HepG2 (cell line): ENCODE measurements at regions of chr7 and their contacts with region 1.

Region 1: DNA sequence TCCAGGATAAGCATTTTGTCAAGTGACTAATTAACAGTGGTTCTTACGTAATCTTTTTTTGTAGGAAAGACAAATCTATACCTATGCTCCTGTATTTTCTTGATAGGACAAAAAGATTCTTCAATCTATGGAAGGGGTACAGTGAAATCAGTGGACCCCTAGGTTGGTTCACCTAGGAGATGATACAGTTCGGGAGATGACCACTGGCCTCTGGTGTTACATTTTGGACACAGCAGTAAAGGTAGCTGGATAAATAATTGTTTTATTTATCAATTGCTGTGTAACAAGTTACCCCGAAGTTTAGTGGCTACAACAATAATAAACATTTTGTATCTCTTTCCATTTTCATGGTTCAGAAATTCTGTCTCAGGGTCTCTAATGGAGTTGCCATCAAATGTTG is 288.2 kb upstream of the MAGI2 start:
- DNase-seq: no peak
- ATAC-seq: peak; percentile 58
- H3K4me3 ChIP-seq: no peak overlapping the region
- H3K27ac ChIP-seq: no peak overlapping the region
- H3K4me1 ChIP-seq: no peaks in the 10 kb centered on the region
- H3K27me3 ChIP-seq: no peaks in the 10 kb centered on the region
- CTCF ChIP-seq: no peak
- EP300 ChIP-seq: no peak
- POLR2A ChIP-seq: no peak
- RAD21 ChIP-seq: no peak

Region 2: DNA sequence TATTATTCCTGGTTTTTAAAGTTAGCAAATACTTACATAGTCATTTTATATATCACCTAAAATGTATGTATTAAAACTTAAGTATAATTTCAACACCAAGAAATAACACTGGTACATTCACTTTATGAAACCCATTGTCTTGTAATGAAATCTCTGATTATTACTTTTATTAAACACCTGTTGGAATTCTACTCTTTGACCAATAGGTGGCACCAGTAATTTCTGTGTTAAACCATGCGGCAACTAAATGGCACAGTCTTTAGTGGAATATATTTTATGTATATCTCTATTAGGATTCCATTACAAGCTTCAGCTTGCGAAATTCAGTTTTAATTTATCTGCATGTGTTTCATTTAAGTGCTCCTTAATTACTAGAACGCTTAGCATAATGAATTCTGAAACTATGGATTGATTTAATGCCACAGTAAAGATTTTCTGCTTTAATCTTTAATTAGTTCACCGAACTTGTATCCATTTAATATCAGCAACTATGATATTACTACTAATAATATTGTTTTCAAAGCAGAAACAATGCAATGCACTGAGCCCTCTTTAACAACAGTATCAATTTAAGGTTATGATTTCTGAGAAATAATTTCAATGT is 469.5 kb before region 1 on chr7:
- CTCF ChIA-PET with region 1: interaction called, 5 read pairs
- POLR2A ChIA-PET with region 1: no interaction called
- in situ Hi-C with region 1: loop called (anchors 25 kb)
- intact Hi-C with region 1: loop called (anchors 5 kb)
- DNase-seq: peak; percentile 30
- ATAC-seq: no peak
- H3K4me3 ChIP-seq: no peak overlapping the region
- H3K27ac ChIP-seq: no peak overlapping the region
- H3K4me1 ChIP-seq: no peaks in the 10 kb centered on the region
- H3K27me3 ChIP-seq: no peaks in the 10 kb centered on the region; a peak in 1 of 5 replicates
- CTCF ChIP-seq: peak; percentile 52
- EP300 ChIP-seq: no peak
- POLR2A ChIP-seq: no peak
- RAD21 ChIP-seq: no peak

Region 3: GRCh38 chr7:79298145-79298760 is 443.4 kb before region 1 on chr7:
- CTCF ChIA-PET with region 1: interaction called, 5 read pairs
- POLR2A ChIA-PET with region 1: no interaction called
- in situ Hi-C with region 1: loop called (anchors 25 kb)
- intact Hi-C with region 1: loop called (anchors 1 kb)
- DNase-seq: peak; percentile 25
- ATAC-seq: no peak
- H3K4me3 ChIP-seq: no peak overlapping the region
- H3K27ac ChIP-seq: no peak overlapping the region
- H3K4me1 ChIP-seq: peaks cover 24% of the 10 kb centered on the region
- H3K27me3 ChIP-seq: no peaks in the 10 kb centered on the region
- CTCF ChIP-seq: peak; percentile 64
- EP300 ChIP-seq: no peak
- POLR2A ChIP-seq: no peak
- RAD21 ChIP-seq: no peak

Region 4: GRCh38 chr7:79778786-79779770 is 37.4 kb after region 1 on chr7:
- CTCF ChIA-PET with region 1: no interaction called
- POLR2A ChIA-PET with region 1: no interaction called
- in situ Hi-C with region 1: no loop called
- intact Hi-C with region 1: no loop called
- DNase-seq: no peak
- ATAC-seq: no peak
- H3K4me3 ChIP-seq: no peak overlapping the region
- H3K27ac ChIP-seq: no peak overlapping the region
- H3K4me1 ChIP-seq: no peaks in the 10 kb centered on the region
- H3K27me3 ChIP-seq: no peaks in the 10 kb centered on the region
- CTCF ChIP-seq: no peak
- EP300 ChIP-seq: no peak
- POLR2A ChIP-seq: no peak
- RAD21 ChIP-seq: no peak